GM13977 (cell line): ENCODE measurements at regions of chr1 and their contacts with region 1.

Region 1: GRCh38 chr1:210400043-210400840 is 71.5 kb downstream of the HHAT start:
- DNase-seq: peak; percentile 62
- CTCF ChIP-seq: peak; percentile 85

Region 2: DNA sequence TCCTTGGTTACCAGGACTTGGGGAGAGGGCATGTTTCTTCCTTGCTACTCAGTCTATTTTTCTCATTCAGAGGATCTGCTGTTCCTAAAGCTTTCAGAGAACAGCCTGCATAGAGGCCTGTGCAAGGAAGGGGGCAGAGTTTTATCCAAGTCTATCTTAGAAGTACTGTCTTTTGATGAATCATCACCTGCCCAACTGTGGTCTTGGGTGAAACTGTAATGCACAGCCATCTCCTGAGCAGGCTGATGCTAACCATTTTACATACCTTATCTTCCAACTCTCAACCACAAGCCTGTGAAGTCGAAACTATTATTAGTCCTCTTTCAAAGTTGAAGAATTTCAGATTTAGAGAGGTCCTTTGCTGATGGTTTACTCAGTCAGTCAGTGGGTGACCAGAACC is 296.5 kb after region 1 on chr1:
- in situ Hi-C with region 1: no loop called
- DNase-seq: peak; percentile 75
- CTCF ChIP-seq: no peak

Region 3: GRCh38 chr1:211133836-211134669 is 733.8 kb after region 1 on chr1 and contains the start of gene KCNH1:
- in situ Hi-C with region 1: loop called (anchors 25 kb)
- DNase-seq: peak; percentile 90
- CTCF ChIP-seq: peak; percentile 85